ENCODE measurements at regions of chr11 and their contacts with region 1.

Region 1: DNA sequence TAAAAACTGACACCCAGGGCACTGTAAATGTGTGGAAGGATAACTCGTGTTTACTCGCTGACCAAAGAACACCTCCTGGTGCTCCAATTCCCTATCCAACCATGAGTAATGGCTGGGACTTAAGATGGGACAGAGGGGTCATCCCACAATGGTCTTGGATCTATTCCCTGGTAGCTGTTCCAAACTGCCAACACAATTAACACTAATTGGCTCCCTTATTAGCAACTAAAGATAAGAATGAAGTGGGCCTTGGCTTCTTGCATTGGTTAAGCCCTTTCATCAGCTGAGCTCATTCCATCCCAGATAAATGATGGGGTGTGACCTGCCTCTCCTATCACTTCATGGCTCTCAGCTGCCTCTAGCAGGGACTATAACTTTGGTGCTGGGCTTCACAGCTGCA is 1.5 kb upstream of the SIK3 start:
- DNase-seq: peak in 1 of 4 donors; percentile 30
- ATAC-seq: no peak
- H3K4me3 ChIP-seq: no peak overlapping the region
- H3K27ac ChIP-seq: peak overlapping the region; percentile 97
- H3K4me1 ChIP-seq: peaks cover 24 to 41% of the 10 kb centered on the region in 2 donors
- H3K27me3 ChIP-seq: no peaks in the 10 kb centered on the region
- CTCF ChIP-seq: no peak

Region 2: GRCh38 chr11:116829525-116830183 is 270.0 kb before region 1 on chr11 and contains the start of gene APOC3:
- intact Hi-C with region 1: no loop called
- DNase-seq: peak in 1 of 4 donors; percentile 37
- ATAC-seq: no peak
- H3K4me3 ChIP-seq: no peak within 1 kb of the TSS
- H3K27ac ChIP-seq: no peak within 1 kb of the TSS
- H3K4me1 ChIP-seq: peaks cover 0 to 5% of the 10 kb centered on the region in 2 donors
- H3K27me3 ChIP-seq: no peaks in the 10 kb centered on the region
- CTCF ChIP-seq: no peak
- polyA plus RNA-seq, gene APOC3: 0.32 to 2.1 (median 0.62) TPM in 5 of 6 donors, not detected in the other

Region 3: DNA sequence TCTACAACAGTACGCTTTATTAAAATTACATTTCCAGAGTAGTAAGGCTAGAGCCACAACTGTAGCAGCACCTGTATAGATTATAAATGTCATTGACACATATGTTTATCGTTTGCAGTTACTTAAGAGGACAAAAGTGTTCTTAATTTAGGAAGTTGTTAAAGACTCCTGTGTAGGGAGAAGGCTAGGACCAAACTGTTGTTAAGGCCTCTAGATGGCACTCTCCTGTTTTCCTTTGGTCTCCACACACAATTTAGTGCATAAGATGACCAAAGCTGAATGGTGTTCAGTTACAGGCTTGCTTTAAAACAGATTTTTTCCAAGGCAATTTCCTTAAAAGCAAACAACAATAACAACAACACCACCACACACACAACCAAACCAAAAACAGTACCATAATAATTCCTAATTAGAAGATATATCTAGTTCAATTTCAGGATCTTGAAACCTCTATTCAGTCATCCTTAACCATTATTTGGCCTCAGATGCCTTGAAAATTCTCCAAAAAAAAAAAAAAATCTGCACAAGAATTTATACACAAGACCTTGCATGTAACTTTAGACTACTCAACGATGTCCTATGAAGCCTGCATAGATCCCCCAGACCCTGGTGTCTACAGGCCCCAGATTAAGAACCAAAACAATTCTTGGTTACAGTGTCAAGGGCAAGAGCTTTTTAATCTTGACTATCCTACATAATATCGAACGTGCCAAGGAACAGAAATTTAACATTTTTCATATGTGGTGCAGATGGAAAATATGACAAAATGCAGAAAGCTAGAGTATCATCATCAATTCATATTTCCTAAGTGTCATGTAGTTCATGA is 219.7 kb before region 1 on chr11:
- intact Hi-C with region 1: loop called in 1 of 2 experiments (anchors 5 kb)
- DNase-seq: peak in 2 of 4 donors; percentile 57 to 74
- ATAC-seq: peak; percentile 97
- H3K4me3 ChIP-seq: no peak overlapping the region
- H3K27ac ChIP-seq: no peak overlapping the region
- H3K4me1 ChIP-seq: peaks cover 4 to 7% of the 10 kb centered on the region in 2 donors
- H3K27me3 ChIP-seq: no peaks in the 10 kb centered on the region
- CTCF ChIP-seq: peak; percentile 57 to 69

Region 4: DNA sequence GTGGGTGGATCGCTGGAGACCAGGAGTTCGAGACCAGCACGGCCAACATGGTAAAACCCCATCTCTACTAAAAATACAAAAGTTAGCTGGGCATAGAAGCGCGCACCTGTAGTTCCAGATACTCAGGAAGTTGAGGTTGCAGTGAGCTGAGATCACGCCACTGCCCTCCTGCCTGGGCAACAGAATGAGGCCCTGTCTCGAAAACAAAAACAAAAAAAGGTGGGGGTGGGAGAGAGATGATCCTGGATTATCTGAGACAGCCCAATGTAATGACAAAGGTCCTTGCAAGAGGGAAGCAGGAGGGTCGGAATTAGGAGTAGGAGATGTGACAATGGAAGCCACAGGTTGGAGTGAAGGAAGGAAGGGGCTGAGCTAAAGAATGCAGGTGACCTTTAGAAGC is 174.6 kb before region 1 on chr11:
- intact Hi-C with region 1: no loop called
- DNase-seq: no peak
- ATAC-seq: no peak
- H3K4me3 ChIP-seq: no peak overlapping the region
- H3K27ac ChIP-seq: no peak overlapping the region
- H3K4me1 ChIP-seq: peaks cover 4 to 30% of the 10 kb centered on the region in 2 donors
- H3K27me3 ChIP-seq: no peaks in the 10 kb centered on the region
- CTCF ChIP-seq: no peak

Region 5: GRCh38 chr11:117045196-117045595 is 54.5 kb before region 1 on chr11:
- intact Hi-C with region 1: no loop called
- DNase-seq: peak in 1 of 4 donors; percentile 39
- ATAC-seq: peak; percentile 70
- H3K4me3 ChIP-seq: no peak overlapping the region
- H3K27ac ChIP-seq: no peak overlapping the region
- H3K4me1 ChIP-seq: peaks cover 12 to 54% of the 10 kb centered on the region in 2 donors
- H3K27me3 ChIP-seq: no peaks in the 10 kb centered on the region
- CTCF ChIP-seq: no peak

Region 6: GRCh38 chr11:117409511-117409910 is 309.8 kb after region 1 on chr11:
- intact Hi-C with region 1: no loop called
- DNase-seq: no peak
- ATAC-seq: no peak
- H3K4me3 ChIP-seq: no peak overlapping the region
- H3K27ac ChIP-seq: no peak overlapping the region
- H3K4me1 ChIP-seq: no peaks in the 10 kb centered on the region
- H3K27me3 ChIP-seq: no peaks in the 10 kb centered on the region
- CTCF ChIP-seq: no peak